ENCODE measurements at regions of chr7 and their contacts with region 1.

Region 1: DNA sequence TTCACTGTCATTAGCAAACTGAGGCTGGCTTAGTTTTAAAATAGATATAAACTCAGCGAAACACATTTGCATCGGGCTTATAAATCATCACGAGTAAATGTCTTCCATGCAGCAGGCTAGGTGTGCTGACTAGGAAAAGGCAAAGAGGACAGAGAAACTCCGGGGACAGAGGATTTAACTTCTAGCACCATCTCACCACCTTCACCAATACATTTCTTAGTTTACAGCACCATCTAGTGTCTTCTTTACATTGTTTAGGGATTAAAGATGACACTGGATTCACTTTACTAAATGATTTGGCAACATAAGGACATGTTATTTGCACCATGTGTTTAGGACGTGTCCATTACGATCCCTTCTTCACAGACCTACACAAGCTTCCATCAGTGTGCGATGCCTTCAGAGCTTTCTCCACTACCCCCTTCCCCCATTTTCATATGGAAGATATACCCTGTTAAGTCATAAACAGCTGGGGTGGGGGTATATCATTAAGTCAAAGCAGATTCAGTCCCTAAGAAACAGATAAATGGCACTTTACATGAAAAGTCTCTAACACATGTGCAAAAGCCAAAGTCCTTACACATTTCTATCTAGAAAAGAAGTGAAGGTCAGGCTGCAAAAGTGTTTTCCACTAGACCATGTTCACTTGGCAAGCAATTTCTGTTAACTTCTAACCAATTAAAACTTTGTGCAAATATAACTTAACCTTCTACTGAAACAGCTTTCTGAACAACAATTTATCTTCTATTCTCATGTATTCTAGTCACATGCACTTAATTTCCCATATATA is 103.3 kb downstream of the GRB10 start:
- DNase-seq: no peak
- H3K4me3 ChIP-seq: no peak overlapping the region
- H3K27ac ChIP-seq: no peak overlapping the region
- H3K4me1 ChIP-seq: peaks cover 0 to 26% of the 10 kb centered on the region in 2 donors
- H3K27me3 ChIP-seq: no peaks in the 10 kb centered on the region
- CTCF ChIP-seq: peak; percentile 5 to 57 (median 38)
- POLR2A ChIP-seq: no peak

Region 2: DNA sequence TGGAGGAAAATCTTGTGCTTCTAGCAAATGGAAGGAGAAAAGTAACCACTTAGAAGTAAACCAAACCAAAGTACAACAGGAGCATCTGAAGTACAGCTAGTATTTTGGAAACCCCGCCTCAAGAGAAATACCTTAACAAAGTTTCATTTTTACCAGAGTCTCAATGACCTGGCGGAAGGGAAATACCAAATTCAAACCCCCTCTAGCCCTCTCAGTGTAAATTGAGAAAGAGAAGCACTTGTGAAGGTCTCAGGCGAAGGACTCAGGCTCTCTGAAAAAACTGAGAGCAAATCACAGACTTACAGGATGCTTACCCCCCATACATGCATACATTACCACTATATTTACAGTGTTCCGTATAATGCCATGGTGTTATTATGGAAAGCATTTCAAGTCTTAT is 656.4 kb before region 1 on chr7:
- intact Hi-C with region 1: no loop called
- DNase-seq: no peak
- H3K4me3 ChIP-seq: no peak overlapping the region
- H3K27ac ChIP-seq: no peak overlapping the region
- H3K4me1 ChIP-seq: no peaks in the 10 kb centered on the region
- H3K27me3 ChIP-seq: no peaks in the 10 kb centered on the region
- CTCF ChIP-seq: no peak
- POLR2A ChIP-seq: no peak

Region 3: DNA sequence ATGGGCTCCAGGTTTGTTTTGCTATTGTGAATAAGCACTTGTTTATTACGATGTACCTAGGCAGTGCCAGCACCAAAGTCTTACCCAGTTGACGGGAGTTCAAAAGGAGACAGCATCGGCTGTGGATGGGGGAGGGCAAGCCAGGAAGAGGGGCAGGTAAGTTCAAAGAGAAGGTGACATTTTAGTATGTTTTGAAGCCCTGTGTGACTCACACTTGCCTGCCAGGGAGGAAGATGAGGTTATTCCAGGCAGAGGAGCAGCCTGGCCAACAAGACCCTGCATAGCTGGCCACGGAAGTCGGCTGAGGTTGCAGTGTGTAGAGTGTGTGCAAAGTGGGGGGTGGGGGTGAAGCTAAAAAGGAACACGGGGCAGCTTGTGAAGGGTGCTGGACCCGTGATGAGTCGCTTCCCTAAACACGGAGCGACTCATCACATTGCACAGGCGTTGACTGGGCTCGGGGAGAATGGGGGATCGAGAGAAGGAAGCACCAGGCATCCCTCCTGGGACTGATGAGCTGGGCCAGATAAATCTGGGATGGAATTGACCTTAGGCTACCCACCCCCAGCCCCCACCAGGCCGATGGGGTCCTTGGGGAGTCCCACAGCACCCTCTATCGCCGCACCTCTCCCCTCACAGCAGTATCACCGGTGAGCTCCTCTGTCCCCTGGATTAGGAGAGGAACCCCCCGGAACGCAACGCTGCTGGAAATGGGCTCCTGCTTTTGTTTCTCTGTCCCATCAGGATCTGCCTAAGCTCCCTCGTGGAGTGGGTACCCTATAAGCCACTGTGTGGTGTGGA is 472.8 kb before region 1 on chr7:
- intact Hi-C with region 1: loop called in 1 of 2 experiments (anchors 10 kb)
- DNase-seq: peak in 4 of 7 donors; percentile 25 to 56 (median 38)
- H3K4me3 ChIP-seq: no peak overlapping the region
- H3K27ac ChIP-seq: no peak overlapping the region
- H3K4me1 ChIP-seq: no peaks in the 10 kb centered on the region
- H3K27me3 ChIP-seq: no peaks in the 10 kb centered on the region
- CTCF ChIP-seq: no peak
- POLR2A ChIP-seq: no peak

Region 4: GRCh38 chr7:50970092-50970491 is 290.7 kb after region 1 on chr7:
- intact Hi-C with region 1: no loop called
- DNase-seq: no peak
- H3K4me3 ChIP-seq: no peak overlapping the region
- H3K27ac ChIP-seq: no peak overlapping the region
- H3K4me1 ChIP-seq: no peaks in the 10 kb centered on the region
- H3K27me3 ChIP-seq: no peaks in the 10 kb centered on the region
- CTCF ChIP-seq: no peak
- POLR2A ChIP-seq: no peak

Measured in adrenal gland (tissue), 19 donors.